Activated T-helper 1 cell treated with anti-CD3 and anti-CD28 coated beads, Interleukin-12 subunit alpha, Interleukin-12 subunit beta, Interleukin-2, Interleukin-4 antibody, amounts not matched to agents 30 ng/mL and 10 ng/mL and 1 ng/mL, durations not matched to agents 14 hours and 24 hours and 36 hours (primary cell): ENCODE measurements at regions of chr6 and their contacts with region 1.

Region 1: DNA sequence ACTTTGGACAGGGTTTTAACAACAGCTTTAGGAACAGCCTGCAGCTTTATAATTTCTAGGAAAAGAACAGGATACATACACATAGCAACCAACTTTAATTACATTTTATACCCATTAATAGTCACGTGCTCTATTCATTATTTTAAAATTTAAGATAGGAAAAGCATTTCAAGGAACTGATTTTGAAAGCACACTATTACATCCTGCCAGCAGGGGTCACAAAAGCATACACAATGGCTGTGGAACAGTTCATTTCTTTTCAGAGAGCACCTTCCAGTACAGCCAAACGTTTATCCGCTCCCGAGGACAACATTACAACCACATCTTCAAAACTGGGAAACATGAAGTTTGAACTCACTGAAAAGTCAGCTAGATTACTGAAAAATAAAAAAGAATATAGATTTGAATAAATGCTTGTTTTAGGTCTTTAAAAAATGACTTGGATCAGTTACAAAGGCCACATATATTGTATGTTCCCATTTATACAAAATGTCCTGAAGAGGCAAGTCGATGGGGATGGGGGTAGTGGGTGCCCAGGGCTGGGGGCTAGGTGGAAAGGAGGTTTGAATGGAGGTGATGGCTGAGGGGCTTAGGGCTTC is 104.6 kb upstream of the EXOC2 start:
- DNase-seq: no peak
- H3K4me3 Mint-ChIP-seq: no peak overlapping the region
- H3K27ac Mint-ChIP-seq: no peak overlapping the region
- H3K4me1 Mint-ChIP-seq: no peaks in the 10 kb centered on the region
- H3K27me3 Mint-ChIP-seq: peaks cover 48% of the 10 kb centered on the region

Region 2: DNA sequence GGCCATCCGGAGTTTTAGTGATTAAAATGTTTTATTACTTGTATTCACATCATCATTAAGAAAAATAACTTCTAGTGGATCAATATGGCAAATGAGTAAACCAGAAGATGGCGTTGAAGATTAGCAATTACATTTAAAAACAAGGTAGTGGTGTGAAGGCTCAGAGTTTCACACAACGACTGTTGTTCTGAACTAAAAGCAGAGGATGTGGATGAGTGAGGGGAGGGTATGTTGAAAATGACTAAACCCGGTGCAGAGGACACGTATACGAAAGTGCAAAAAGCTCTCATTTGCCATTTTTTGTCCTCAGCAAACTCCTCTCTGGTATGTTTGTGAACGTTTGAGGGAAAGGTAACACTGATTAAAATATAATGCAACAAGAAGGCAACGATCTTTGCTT is 408.0 kb before region 1 on chr6:
- intact Hi-C with region 1: no loop called
- DNase-seq: peak; percentile 51
- H3K4me3 Mint-ChIP-seq: peak overlapping the region; percentile 89
- H3K27ac Mint-ChIP-seq: peak overlapping the region; percentile 97
- H3K4me1 Mint-ChIP-seq: peaks cover 25% of the 10 kb centered on the region
- H3K27me3 Mint-ChIP-seq: peaks cover 3% of the 10 kb centered on the region

Region 3: GRCh38 chr6:903761-904160 is 106.2 kb after region 1 on chr6:
- intact Hi-C with region 1: loop called (anchors 10 kb)
- DNase-seq: no peak
- H3K4me3 Mint-ChIP-seq: no peak overlapping the region
- H3K27ac Mint-ChIP-seq: no peak overlapping the region
- H3K4me1 Mint-ChIP-seq: no peaks in the 10 kb centered on the region
- H3K27me3 Mint-ChIP-seq: peaks cover 6% of the 10 kb centered on the region

Region 4: GRCh38 chr6:1311400-1312202 is 514.0 kb after region 1 on chr6 and contains the start of gene FOXQ1:
- intact Hi-C with region 1: loop called (anchors 2 kb)
- DNase-seq: no peak
- H3K4me3 Mint-ChIP-seq: peak within 1 kb of the TSS; percentile 53
- H3K27ac Mint-ChIP-seq: peak within 1 kb of the TSS; percentile 84
- H3K4me1 Mint-ChIP-seq: peaks cover 28% of the 10 kb centered on the region
- H3K27me3 Mint-ChIP-seq: peaks cover 69% of the 10 kb centered on the region
- total RNA-seq, gene FOXQ1: not detected in 2 replicates

Region 5: DNA sequence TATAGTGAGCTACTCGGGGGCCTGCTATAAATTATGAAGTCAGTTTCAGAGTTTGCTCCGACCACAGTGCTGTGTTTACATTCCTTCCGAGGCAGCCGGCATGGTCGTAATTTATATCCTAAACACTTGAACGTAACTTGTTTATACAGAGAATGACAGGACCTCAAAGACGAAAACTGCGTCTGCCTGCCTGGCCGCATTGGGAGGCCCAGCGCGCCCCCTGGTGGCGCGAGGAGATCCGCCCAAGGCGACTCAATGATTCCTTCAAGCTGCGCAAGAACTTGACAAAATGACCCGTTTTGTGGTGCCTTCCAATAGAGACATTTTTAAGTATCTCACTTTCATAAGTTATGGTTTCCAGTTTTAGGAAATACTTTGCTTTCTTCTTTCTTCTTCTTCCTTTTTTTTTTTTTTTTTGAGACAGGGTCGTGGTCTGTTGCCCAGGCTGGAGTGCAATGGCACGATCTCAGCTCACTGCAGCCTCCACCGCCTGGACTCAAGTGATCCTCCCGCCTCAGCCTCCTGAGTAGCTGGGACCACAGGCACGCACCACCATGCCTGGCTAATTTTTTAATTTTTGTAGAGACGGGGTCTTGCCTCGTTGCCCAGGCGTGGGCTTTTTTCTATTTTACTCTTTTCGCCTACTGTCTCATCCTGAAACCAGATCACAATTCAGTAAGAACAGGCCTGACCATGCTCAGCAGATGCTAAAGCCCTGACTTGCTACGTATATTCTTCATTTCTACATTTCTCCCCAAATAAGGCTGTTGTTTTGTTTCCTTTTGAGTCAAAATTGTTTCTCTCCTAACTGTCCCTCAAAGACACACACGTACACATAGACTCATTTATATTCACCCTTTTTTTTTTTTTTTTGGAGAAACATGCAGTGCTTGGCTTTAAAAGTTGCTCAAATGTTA is 599.6 kb after region 1 on chr6:
- intact Hi-C with region 1: loop called (anchors 1 kb)
- DNase-seq: peak; percentile 42
- H3K4me3 Mint-ChIP-seq: no peak overlapping the region
- H3K27ac Mint-ChIP-seq: no peak overlapping the region
- H3K4me1 Mint-ChIP-seq: peaks cover 5% of the 10 kb centered on the region
- H3K27me3 Mint-ChIP-seq: peaks cover 53% of the 10 kb centered on the region

Region 6: GRCh38 chr6:1436334-1437306 is 639.0 kb after region 1 on chr6:
- intact Hi-C with region 1: loop called (anchors 1 kb)
- DNase-seq: peak; percentile 39
- H3K4me3 Mint-ChIP-seq: no peak overlapping the region
- H3K27ac Mint-ChIP-seq: no peak overlapping the region
- H3K4me1 Mint-ChIP-seq: no peaks in the 10 kb centered on the region
- H3K27me3 Mint-ChIP-seq: peaks cover 26% of the 10 kb centered on the region